ENCODE measurements at regions of chr1 and their contacts with region 1.

Region 1: GRCh38 chr1:167721617-167722151 is at the start of gene MPZL1:
- DNase-seq: peak; percentile 97
- ATAC-seq: peak; percentile 99
- total RNA-seq, gene MPZL1: 66.7 to 69.7 TPM

Region 2: GRCh38 chr1:167791281-167792187 is 69.8 kb after region 1 on chr1:
- intact Hi-C with region 1: loop called in 1 of 2 experiments (anchors 5 kb)
- DNase-seq: peak; percentile 62
- ATAC-seq: peak; percentile 51 to 68

Region 3: GRCh38 chr1:167803358-167804207 is 81.9 kb after region 1 on chr1:
- intact Hi-C with region 1: loop called in 1 of 2 experiments (anchors 2 kb)
- DNase-seq: peak; percentile 95
- ATAC-seq: peak; percentile 96